Mammary epithelial cell (primary cell): ENCODE measurements at regions of chr17 and their contacts with region 1.

Region 1: DNA sequence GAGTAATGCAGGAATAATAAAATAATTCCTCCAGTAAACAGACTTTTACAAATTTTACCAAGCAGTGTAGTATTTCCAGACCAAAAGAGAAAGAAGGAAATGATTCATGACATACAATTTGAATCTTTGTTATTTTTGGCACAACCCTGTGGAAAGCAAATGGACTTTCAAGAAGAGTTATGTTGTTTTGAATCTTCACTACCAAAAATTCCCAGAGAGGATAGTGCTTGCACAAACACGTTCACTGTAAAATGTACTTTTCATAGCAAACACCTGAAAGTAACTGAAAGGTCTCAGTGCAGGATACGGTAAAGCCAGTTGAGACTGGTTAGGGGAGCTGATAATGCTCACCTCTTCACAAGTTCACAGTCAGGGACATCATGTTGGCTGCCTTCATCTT is 107.1 kb downstream of the USP22 start:
- DNase-seq: peak; percentile 96
- H3K4me3 ChIP-seq: peak overlapping the region in 1 of 3 experiments; percentile 9
- H3K27ac ChIP-seq: peak overlapping the region; percentile 76
- H3K4me1 ChIP-seq: peaks cover 31% of the 10 kb centered on the region
- H3K27me3 ChIP-seq: no peaks in the 10 kb centered on the region
- CTCF ChIP-seq: no peak

Region 2: DNA sequence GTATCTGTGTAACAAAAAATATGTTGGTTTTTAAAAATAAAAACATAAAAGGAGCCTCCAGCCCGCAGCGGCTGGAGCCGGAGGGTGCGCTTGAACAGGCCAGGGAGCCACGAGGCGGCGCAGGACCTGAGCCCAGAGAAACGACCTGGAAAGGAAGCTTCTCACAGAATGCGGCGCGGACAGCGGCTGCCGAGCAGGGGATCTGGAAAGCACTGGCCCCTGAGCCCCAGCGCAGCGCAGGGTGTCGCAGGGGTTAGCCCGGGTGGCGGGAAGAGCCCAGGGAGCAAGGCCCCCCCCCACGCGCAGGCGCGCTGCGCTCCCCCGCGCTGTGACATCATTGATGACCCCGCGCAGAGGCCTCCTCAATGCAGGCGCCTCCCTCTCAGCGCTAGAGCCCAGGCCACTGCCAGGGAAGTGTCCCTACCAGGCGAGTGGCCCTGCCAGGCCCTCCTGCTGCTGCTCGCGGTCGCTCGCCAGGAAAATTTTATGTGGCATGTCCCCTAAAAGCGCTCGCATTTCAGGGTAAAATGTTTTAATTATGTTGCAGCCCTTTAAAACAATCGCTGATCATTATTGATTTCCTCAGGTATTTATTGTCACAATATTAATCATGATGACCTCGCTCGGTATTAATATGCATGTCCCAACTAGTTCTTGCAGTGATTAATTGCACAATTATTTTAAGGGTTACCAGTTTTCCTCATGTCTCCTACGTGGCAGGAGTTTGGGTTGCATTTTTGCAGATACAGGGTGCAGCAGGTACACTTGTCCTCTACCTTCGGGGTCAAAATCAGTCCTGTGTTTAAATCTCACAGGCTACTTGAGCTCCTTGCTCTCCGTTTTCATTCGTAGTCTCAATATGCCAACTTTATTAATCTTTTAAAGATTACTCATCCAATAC is 27.1 kb before region 1 on chr17:
- CTCF ChIA-PET with region 1: no interaction called
- dilution Hi-C with region 1: no loop called
- in situ Hi-C with region 1: no loop called
- intact Hi-C with region 1: loop called (anchors 2 kb)
- DNase-seq: peak; percentile 70
- H3K4me3 ChIP-seq: peak overlapping the region; percentile 58 to 72 (median 64)
- H3K27ac ChIP-seq: peak overlapping the region; percentile 82
- H3K4me1 ChIP-seq: peaks cover 16% of the 10 kb centered on the region
- H3K27me3 ChIP-seq: no peaks in the 10 kb centered on the region
- CTCF ChIP-seq: peak; percentile 38 to 77

Region 3: GRCh38 chr17:21425736-21426135 is 490.0 kb after region 1 on chr17:
- CTCF ChIA-PET with region 1: no interaction called
- dilution Hi-C with region 1: no loop called
- in situ Hi-C with region 1: no loop called
- intact Hi-C with region 1: no loop called
- DNase-seq: no peak
- H3K4me3 ChIP-seq: no peak overlapping the region
- H3K27ac ChIP-seq: no peak overlapping the region
- H3K4me1 ChIP-seq: peaks cover 4% of the 10 kb centered on the region
- H3K27me3 ChIP-seq: no peaks in the 10 kb centered on the region
- CTCF ChIP-seq: no peak